Transverse colon (tissue), 4 donors: ENCODE measurements at regions of chr19 and their contacts with region 1.

Region 1: DNA sequence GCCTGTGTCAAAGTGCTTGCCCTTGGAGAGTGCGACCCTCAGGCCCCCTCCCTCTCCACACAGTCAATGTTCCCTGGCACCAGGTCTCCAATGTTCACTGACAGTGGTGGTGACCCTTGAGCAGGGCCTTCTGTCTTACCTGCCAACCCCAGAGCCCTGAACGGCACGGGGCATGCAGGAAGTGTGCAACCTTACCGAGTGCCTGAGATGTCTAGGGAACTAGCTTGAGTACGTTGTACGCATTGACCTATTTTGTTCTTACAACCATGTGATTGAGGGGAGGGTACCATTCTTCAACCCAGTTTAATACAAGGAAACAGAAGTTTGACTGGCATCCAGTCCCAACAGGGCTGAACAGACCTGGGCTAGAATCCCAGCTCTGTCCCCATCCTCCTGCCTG is 13.2 kb downstream of the MAG start:
- DNase-seq: no peak
- H3K4me3 ChIP-seq: no peak overlapping the region
- H3K27ac ChIP-seq: no peak overlapping the region
- H3K4me1 ChIP-seq: no peaks in the 10 kb centered on the region
- H3K27me3 ChIP-seq: no peaks in the 10 kb centered on the region
- CTCF ChIP-seq: no peak
- EP300 ChIP-seq: no peak
- POLR2A ChIP-seq: no peak

Region 2: GRCh38 chr19:35281303-35281702 is 23.9 kb before region 1 on chr19:
- in situ Hi-C with region 1: no loop called
- intact Hi-C with region 1: loop called (anchors 1 kb)
- DNase-seq: no peak
- H3K4me3 ChIP-seq: no peak overlapping the region
- H3K27ac ChIP-seq: no peak overlapping the region
- H3K4me1 ChIP-seq: no peaks in the 10 kb centered on the region
- H3K27me3 ChIP-seq: peaks cover 30% of the 10 kb centered on the region
- CTCF ChIP-seq: no peak
- EP300 ChIP-seq: no peak
- POLR2A ChIP-seq: no peak